ENCODE measurements at regions of chr11 and their contacts with region 1.

Region 1: DNA sequence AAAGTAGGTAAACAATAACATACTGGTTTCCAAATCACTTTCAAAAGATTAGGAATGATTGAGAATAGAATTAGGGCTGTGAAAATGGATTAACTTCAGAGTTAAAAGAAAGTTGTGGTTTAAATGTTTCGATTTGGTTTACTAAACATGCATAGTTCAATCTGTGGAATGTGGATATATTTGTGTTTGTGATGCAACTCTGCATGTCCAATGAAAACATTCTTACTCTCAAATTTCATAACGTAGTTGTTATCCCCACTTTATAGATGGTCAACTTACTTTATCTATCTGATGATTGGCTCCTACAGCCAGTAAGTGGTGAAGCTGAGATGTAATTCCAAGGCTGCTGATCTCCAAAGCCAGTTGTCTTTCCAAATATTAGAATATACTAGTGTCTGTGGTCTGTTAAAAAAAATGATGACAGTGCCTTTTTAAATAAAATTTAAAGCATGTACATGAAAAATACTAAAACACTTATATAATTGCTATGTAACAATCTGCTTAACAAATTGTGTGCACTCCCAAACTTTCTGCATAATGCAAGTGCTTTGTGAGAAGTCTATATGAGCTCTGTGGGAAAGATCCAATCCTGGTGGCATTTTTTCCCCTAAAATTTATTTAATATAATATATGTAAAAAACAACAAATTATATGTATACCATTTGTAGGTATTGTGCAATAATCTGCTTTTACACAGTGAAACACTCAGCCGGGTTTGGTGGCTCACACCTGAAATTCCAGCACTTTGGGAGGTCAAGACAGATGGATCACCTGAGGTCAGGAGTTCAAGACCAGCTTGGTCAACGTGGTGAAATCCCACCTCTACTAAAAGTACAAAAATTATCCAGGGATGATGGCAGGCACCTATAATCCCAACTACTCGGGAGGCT is 9.7 kb upstream of the SIK3 start:
- DNase-seq: no peak
- H3K4me3 ChIP-seq: no peak overlapping the region
- H3K4me3 Mint-ChIP-seq: no peak overlapping the region
- H3K27ac ChIP-seq: no peak overlapping the region
- H3K27ac Mint-ChIP-seq: no peak overlapping the region
- H3K4me1 ChIP-seq: no peaks in the 10 kb centered on the region
- H3K4me1 Mint-ChIP-seq: peaks cover 0 to 5% (median 4%) of the 10 kb centered on the region in 4 donors
- H3K27me3 ChIP-seq: no peaks in the 10 kb centered on the region
- H3K27me3 Mint-ChIP-seq: no peaks in the 10 kb centered on the region

Region 2: GRCh38 chr11:116742104-116742503 is 365.8 kb before region 1 on chr11:
- CTCF ChIA-PET with region 1: interaction called, 10 read pairs
- POLR2A ChIA-PET with region 1: no interaction called
- intact Hi-C with region 1: no loop called
- DNase-seq: no peak
- H3K4me3 ChIP-seq: no peak overlapping the region
- H3K4me3 Mint-ChIP-seq: no peak overlapping the region
- H3K27ac ChIP-seq: no peak overlapping the region
- H3K27ac Mint-ChIP-seq: no peak overlapping the region
- H3K4me1 ChIP-seq: no peaks in the 10 kb centered on the region
- H3K4me1 Mint-ChIP-seq: no peaks in the 10 kb centered on the region
- H3K27me3 ChIP-seq: no peaks in the 10 kb centered on the region
- H3K27me3 Mint-ChIP-seq: no peaks in the 10 kb centered on the region

Region 3: GRCh38 chr11:116835791-116836631 is 271.9 kb before region 1 on chr11:
- CTCF ChIA-PET with region 1: interaction called, 35 read pairs
- POLR2A ChIA-PET with region 1: no interaction called
- intact Hi-C with region 1: loop called (anchors 1 kb)
- DNase-seq: peak; percentile 78 to 82 (median 80)
- H3K4me3 ChIP-seq: peak overlapping the region; percentile 36 to 60
- H3K4me3 Mint-ChIP-seq: peak overlapping the region; percentile 67 to 87 (median 78)
- H3K27ac ChIP-seq: no peak overlapping the region
- H3K27ac Mint-ChIP-seq: peak overlapping the region in 6 of 7 donors; percentile 29 to 76 (median 64)
- H3K4me1 ChIP-seq: peaks cover 15% of the 10 kb centered on the region
- H3K4me1 Mint-ChIP-seq: peaks cover 4 to 21% (median 9%) of the 10 kb centered on the region in 4 donors
- H3K27me3 ChIP-seq: no peaks in the 10 kb centered on the region
- H3K27me3 Mint-ChIP-seq: no peaks in the 10 kb centered on the region

Region 4: GRCh38 chr11:116879800-116880625 is 227.9 kb before region 1 on chr11:
- CTCF ChIA-PET with region 1: interaction called, 155 read pairs
- POLR2A ChIA-PET with region 1: interaction called, 8 read pairs
- intact Hi-C with region 1: loop called (anchors 1 kb)
- DNase-seq: peak; percentile 39 to 56 (median 50)
- H3K4me3 ChIP-seq: no peak overlapping the region
- H3K4me3 Mint-ChIP-seq: no peak overlapping the region
- H3K27ac ChIP-seq: no peak overlapping the region
- H3K27ac Mint-ChIP-seq: peak overlapping the region; percentile 35 to 79 (median 64)
- H3K4me1 ChIP-seq: no peaks in the 10 kb centered on the region
- H3K4me1 Mint-ChIP-seq: peaks cover 10 to 12% (median 11%) of the 10 kb centered on the region in 4 donors
- H3K27me3 ChIP-seq: no peaks in the 10 kb centered on the region
- H3K27me3 Mint-ChIP-seq: no peaks in the 10 kb centered on the region

Region 5: DNA sequence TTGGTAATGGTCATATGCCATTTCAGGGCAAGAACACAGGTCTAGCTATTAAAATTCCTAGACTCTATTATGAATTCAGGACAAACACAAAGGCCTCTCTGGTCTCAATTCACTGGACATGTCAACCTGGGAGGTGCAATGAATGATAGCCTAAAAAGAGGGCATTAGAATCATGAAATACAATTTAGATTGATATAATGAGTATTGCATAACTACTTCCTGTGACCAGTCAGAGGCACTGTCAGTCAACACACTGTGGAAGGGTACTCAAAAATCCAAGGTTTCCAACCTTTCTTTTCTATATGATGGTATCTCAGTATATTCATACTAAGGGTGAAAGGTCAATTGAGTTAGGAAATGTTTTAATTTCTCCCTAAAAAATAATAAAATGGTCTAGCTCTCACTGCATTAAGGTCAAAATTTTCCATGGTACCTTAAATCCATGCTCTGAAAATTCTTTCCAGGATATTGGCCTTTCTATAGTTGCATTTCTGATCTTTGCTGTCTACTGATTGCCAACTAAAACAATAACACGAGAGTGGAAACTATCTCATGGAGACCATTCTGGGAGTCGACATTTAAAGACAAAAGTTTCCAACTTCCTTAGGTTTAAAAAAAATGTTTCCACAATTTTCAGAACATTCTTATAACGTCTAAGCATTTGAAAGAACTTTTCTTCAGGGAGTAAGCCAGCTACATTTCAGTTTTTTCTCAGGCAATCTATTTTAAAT is 188.9 kb before region 1 on chr11:
- CTCF ChIA-PET with region 1: interaction called, 11 read pairs
- POLR2A ChIA-PET with region 1: no interaction called
- intact Hi-C with region 1: no loop called
- DNase-seq: no peak
- H3K4me3 ChIP-seq: no peak overlapping the region
- H3K4me3 Mint-ChIP-seq: no peak overlapping the region
- H3K27ac ChIP-seq: no peak overlapping the region
- H3K27ac Mint-ChIP-seq: peak overlapping the region in 2 of 7 donors; percentile 41 to 53
- H3K4me1 ChIP-seq: peaks cover 10% of the 10 kb centered on the region
- H3K4me1 Mint-ChIP-seq: peaks cover 7 to 46% (median 24%) of the 10 kb centered on the region in 4 donors
- H3K27me3 ChIP-seq: no peaks in the 10 kb centered on the region
- H3K27me3 Mint-ChIP-seq: no peaks in the 10 kb centered on the region